Natural killer cell (primary cell): ENCODE measurements at regions of chr6 and their contacts with region 1.

Region 1: DNA sequence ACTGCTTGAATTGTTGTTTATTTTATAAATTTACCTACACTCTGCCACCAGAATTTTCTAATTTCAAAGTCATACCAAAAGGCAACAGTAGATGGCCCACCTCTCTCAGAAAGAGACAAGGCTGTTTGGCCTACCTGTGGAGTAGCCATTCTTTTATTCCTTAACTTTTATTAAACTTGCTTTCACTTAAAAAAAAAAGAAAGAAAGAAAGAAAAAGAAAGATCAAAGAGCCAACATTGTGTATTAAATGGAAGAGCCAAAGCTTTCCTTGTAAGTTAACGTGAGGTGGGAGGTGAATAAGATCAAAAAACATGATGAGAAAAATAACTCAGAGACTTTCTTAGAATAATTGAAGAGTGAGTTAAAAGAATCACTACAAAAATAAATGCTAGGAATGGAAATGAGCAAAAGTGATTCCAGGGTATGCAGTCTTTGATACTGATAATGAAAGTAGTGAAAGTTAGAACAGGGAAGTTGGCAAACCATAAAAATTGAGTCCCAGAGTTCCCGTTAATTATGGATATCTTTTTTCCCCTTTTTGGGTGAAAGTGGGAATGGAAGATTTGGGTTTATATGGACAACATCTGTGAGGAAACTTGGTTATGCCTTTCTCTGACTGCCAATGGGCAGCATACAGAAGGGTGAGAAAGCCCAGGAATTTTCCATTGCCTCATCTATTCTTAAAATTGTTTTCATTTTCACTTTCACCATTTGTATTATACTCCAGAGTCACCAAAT is 35.9 kb upstream of the MYB start:
- DNase-seq: peak in 1 of 2 donors; percentile 68
- ATAC-seq: peak; percentile 57 to 73 (median 57)
- H3K4me3 ChIP-seq: peak overlapping the region; percentile 4
- H3K4me3 Mint-ChIP-seq: peak overlapping the region; percentile 77
- H3K27ac ChIP-seq: no peak overlapping the region
- H3K27ac Mint-ChIP-seq: peak overlapping the region; percentile 51 to 80
- H3K4me1 ChIP-seq: no peaks in the 10 kb centered on the region
- H3K4me1 Mint-ChIP-seq: peaks cover 6 to 18% of the 10 kb centered on the region in 2 donors
- H3K27me3 ChIP-seq: no peaks in the 10 kb centered on the region
- H3K27me3 Mint-ChIP-seq: no peaks in the 10 kb centered on the region
- CTCF ChIP-seq: peak; percentile 66

Region 2: DNA sequence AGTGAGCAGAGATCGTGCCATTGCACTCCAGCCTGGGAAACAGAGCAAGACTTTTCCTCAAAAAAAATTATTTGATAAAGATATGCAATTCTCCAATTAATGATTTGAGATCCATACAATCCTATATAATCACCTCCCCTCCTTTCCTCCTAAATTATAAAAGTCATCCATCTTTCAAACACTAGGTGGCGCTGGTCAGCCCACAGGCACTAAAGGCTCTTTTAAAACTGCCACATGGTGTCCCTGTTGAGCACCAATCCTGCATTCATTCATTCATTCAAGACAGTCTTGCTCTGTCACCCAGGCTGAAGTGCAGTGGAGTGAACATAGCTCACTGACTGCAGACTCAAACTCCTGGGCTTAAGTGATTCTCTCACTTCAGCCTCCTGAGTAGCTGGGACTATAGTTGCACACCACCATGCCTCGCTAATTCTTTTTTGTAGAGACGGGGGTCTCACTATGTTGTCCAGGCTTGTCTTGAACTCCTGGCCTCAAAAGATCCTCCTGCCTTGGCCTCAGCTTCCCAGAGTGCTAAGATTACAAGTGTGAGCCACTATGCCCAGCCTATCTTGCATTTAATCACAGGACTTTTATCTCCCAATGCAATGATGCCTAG is 1034.1 kb before region 1 on chr6:
- intact Hi-C with region 1: no loop called
- DNase-seq: peak in 1 of 2 donors; percentile 81
- ATAC-seq: peak; percentile 81 to 87 (median 87)
- H3K4me3 ChIP-seq: no peak overlapping the region
- H3K4me3 Mint-ChIP-seq: no peak overlapping the region
- H3K27ac ChIP-seq: no peak overlapping the region
- H3K27ac Mint-ChIP-seq: no peak overlapping the region
- H3K4me1 ChIP-seq: no peaks in the 10 kb centered on the region
- H3K4me1 Mint-ChIP-seq: no peaks in the 10 kb centered on the region
- H3K27me3 ChIP-seq: peaks cover 2% of the 10 kb centered on the region
- H3K27me3 Mint-ChIP-seq: peaks cover 16 to 31% of the 10 kb centered on the region in 2 donors
- CTCF ChIP-seq: peak; percentile 90

Region 3: GRCh38 chr6:135257631-135258405 is 112.6 kb after region 1 on chr6:
- intact Hi-C with region 1: loop called (anchors 2 kb)
- DNase-seq: peak in 1 of 2 donors; percentile 17
- ATAC-seq: no peak
- H3K4me3 ChIP-seq: no peak overlapping the region
- H3K4me3 Mint-ChIP-seq: no peak overlapping the region
- H3K27ac ChIP-seq: no peak overlapping the region
- H3K27ac Mint-ChIP-seq: no peak overlapping the region
- H3K4me1 ChIP-seq: no peaks in the 10 kb centered on the region
- H3K4me1 Mint-ChIP-seq: no peaks in the 10 kb centered on the region
- H3K27me3 ChIP-seq: no peaks in the 10 kb centered on the region
- H3K27me3 Mint-ChIP-seq: peaks cover 0 to 15% of the 10 kb centered on the region in 2 donors
- CTCF ChIP-seq: no peak

Region 4: DNA sequence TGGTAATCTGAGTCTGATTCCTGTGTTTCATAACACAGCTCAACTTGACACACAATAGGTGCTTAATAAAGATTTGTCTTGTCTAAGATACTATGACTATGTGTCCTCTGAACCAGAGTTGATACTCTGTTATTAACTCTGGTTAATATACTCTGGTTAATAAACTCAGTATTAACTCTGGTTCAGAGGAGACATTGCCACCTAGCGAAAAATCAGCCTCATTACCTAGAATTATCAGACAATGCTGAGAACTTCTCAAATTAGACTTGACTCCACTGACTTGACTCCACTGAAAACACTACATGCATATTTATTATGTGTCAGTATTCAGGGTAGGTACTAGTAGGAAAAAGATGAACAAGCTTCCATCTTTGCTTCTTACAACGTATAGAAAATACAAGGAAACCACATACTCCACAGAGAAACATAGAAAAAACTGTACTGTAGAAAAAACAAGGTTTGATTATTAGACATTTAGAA is 278.5 kb after region 1 on chr6:
- intact Hi-C with region 1: loop called (anchors 1 kb)
- DNase-seq: peak in 1 of 2 donors; percentile 55
- ATAC-seq: peak; percentile 60 to 74 (median 61)
- H3K4me3 ChIP-seq: no peak overlapping the region
- H3K4me3 Mint-ChIP-seq: no peak overlapping the region
- H3K27ac ChIP-seq: no peak overlapping the region
- H3K27ac Mint-ChIP-seq: no peak overlapping the region
- H3K4me1 ChIP-seq: no peaks in the 10 kb centered on the region
- H3K4me1 Mint-ChIP-seq: no peaks in the 10 kb centered on the region
- H3K27me3 ChIP-seq: no peaks in the 10 kb centered on the region
- H3K27me3 Mint-ChIP-seq: no peaks in the 10 kb centered on the region
- CTCF ChIP-seq: peak; percentile 82